B cell (primary cell): ENCODE measurements at regions of chr11 and their contacts with region 1.

Region 1: DNA sequence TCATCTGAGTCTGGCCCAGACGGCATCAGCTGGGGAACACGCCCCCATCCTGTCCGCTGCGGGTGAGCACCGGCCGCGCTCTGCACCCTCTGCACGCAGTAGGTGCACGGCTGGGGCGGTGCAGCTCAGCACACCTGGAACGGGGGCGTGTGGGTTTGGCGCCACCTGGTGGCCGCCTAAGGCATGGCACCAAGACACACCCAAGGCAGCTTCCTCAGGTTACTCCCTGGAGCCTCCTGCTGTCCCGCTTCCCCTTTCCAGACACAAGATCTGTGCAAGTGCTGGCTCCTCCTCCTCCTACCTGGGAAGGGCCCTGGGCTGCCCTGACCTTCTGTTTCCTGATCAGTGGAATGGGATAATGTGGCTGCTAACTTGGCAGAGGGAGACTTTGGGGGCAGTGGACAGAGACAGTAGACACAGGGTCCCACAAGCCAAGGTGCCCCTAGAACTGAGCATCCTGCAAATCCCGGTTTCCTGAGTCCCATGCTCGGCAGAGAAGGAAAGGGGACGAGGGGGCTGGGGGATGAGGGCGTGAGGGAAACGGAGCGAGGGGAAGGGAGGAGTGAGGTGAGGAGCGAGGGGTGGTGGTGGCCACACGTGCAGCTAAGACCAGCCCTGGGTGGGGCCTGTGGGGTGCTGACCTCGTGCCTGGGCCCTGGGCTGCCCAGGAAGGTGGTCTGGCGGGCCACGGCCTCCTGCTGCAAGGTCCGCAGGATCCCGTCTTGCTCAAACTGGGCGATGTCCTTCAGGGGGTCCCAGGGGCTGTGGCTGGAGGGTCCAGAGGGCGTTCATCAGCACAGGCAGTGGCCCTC is 34.8 kb upstream of the CARS1 start:
- DNase-seq: peak; percentile 83
- ATAC-seq: peak; percentile 92
- H3K4me3 ChIP-seq: no peak overlapping the region
- H3K4me3 Mint-ChIP-seq: no peak overlapping the region
- H3K27ac ChIP-seq: no peak overlapping the region
- H3K27ac Mint-ChIP-seq: no peak overlapping the region
- H3K4me1 ChIP-seq: peaks cover 0 to 6% of the 10 kb centered on the region in 2 donors
- H3K4me1 Mint-ChIP-seq: no peaks in the 10 kb centered on the region
- H3K27me3 ChIP-seq: peaks cover 0 to 7% (median 0%) of the 10 kb centered on the region in 4 experiments
- H3K27me3 Mint-ChIP-seq: peaks cover 18% of the 10 kb centered on the region
- CTCF ChIP-seq: peak; percentile 98

Region 2: GRCh38 chr11:2892215-2893020 is 199.6 kb before region 1 on chr11:
- CTCF ChIA-PET with region 1: interaction called, 34 read pairs
- POLR2A ChIA-PET with region 1: no interaction called
- intact Hi-C with region 1: no loop called
- DNase-seq: peak; percentile 74
- ATAC-seq: peak; percentile 69
- H3K4me3 ChIP-seq: peak overlapping the region in 4 of 5 experiments; percentile 33 to 62 (median 50)
- H3K4me3 Mint-ChIP-seq: peak overlapping the region; percentile 75
- H3K27ac ChIP-seq: no peak overlapping the region
- H3K27ac Mint-ChIP-seq: no peak overlapping the region
- H3K4me1 ChIP-seq: peaks cover 15 to 21% of the 10 kb centered on the region in 2 donors
- H3K4me1 Mint-ChIP-seq: peaks cover 17% of the 10 kb centered on the region
- H3K27me3 ChIP-seq: peaks cover 0 to 7% (median 0%) of the 10 kb centered on the region in 4 experiments
- H3K27me3 Mint-ChIP-seq: no peaks in the 10 kb centered on the region
- CTCF ChIP-seq: peak; percentile 88

Region 3: GRCh38 chr11:2975594-2975993 is 116.4 kb before region 1 on chr11:
- CTCF ChIA-PET with region 1: interaction called, 69 read pairs
- POLR2A ChIA-PET with region 1: no interaction called
- intact Hi-C with region 1: no loop called
- DNase-seq: peak; percentile 44
- ATAC-seq: peak; percentile 49
- H3K4me3 ChIP-seq: no peak overlapping the region
- H3K4me3 Mint-ChIP-seq: no peak overlapping the region
- H3K27ac ChIP-seq: no peak overlapping the region
- H3K27ac Mint-ChIP-seq: no peak overlapping the region
- H3K4me1 ChIP-seq: no peaks in the 10 kb centered on the region
- H3K4me1 Mint-ChIP-seq: peaks cover 5% of the 10 kb centered on the region
- H3K27me3 ChIP-seq: no peaks in the 10 kb centered on the region
- H3K27me3 Mint-ChIP-seq: no peaks in the 10 kb centered on the region
- CTCF ChIP-seq: peak; percentile 52

Region 4: GRCh38 chr11:3049430-3050243 is 42.4 kb before region 1 on chr11:
- CTCF ChIA-PET with region 1: interaction called, 106 read pairs
- POLR2A ChIA-PET with region 1: no interaction called
- intact Hi-C with region 1: loop called (anchors 1 kb)
- DNase-seq: peak; percentile 83
- ATAC-seq: peak; percentile 97
- H3K4me3 ChIP-seq: no peak overlapping the region
- H3K4me3 Mint-ChIP-seq: peak overlapping the region; percentile 64
- H3K27ac ChIP-seq: peak overlapping the region; percentile 77 to 81
- H3K27ac Mint-ChIP-seq: peak overlapping the region; percentile 94
- H3K4me1 ChIP-seq: peaks cover 13 to 35% of the 10 kb centered on the region in 2 donors
- H3K4me1 Mint-ChIP-seq: peaks cover 44% of the 10 kb centered on the region
- H3K27me3 ChIP-seq: no peaks in the 10 kb centered on the region
- H3K27me3 Mint-ChIP-seq: no peaks in the 10 kb centered on the region
- CTCF ChIP-seq: no peak

Region 5: DNA sequence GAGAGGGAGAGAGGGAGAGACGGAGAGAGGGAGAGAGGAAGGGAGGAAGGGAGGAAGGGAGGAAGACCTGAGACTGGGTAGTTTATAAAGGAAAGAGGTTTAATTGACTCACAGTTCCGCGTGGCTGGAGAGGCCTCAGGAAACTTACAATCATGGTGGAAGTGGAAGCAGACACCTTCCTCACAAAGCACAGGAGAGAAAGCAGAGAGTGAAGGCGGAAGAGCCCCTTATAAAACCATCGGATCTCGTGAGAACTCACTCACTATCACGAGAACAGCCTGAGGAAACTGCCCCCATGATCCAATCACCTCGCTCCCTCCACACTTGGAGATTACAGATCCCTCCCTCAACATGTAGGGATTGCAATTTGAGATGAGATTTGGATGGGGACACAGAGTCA is 22.6 kb before region 1 on chr11:
- CTCF ChIA-PET with region 1: interaction called, 11 read pairs
- POLR2A ChIA-PET with region 1: no interaction called
- intact Hi-C with region 1: no loop called
- DNase-seq: no peak
- ATAC-seq: no peak
- H3K4me3 ChIP-seq: no peak overlapping the region
- H3K4me3 Mint-ChIP-seq: no peak overlapping the region
- H3K27ac ChIP-seq: no peak overlapping the region
- H3K27ac Mint-ChIP-seq: no peak overlapping the region
- H3K4me1 ChIP-seq: no peaks in the 10 kb centered on the region
- H3K4me1 Mint-ChIP-seq: no peaks in the 10 kb centered on the region
- H3K27me3 ChIP-seq: peaks cover 0 to 2% (median under 1%) of the 10 kb centered on the region in 4 experiments
- H3K27me3 Mint-ChIP-seq: peaks cover 24% of the 10 kb centered on the region
- CTCF ChIP-seq: no peak

Region 6: DNA sequence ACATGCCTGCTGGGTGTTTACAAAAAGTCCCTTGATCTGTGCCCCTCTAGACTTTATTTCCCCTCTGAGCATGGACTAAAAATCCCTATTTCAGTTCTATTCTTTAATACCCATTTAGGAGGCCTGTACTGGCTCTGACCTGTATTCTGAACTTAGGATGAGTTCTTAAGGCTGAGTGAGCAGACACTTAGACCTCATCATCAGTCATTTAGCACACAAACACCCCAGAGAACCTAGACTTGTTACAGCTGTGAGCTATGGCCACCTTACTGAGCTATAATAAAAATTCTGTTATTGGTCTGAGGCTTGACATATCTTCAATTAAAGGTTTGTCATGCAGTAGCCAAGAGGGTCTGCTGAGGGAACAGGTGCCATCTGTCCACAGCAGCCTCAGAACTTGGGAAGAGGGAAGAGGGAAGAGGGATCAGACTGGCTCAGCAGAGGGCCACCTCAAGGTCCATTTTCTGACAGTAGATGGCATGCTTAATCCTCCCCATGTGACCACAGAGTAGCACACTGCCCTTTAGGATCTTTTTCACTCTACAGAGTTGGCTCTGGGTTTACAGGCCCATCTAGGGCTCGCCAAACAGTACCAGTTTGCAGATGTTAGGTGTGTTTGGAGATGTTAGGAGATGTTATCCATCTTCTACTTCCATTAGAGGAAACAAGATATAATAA is 972.4 kb after region 1 on chr11:
- CTCF ChIA-PET with region 1: no interaction called
- POLR2A ChIA-PET with region 1: no interaction called
- intact Hi-C with region 1: no loop called
- DNase-seq: no peak
- ATAC-seq: no peak
- H3K4me3 ChIP-seq: no peak overlapping the region
- H3K4me3 Mint-ChIP-seq: no peak overlapping the region
- H3K27ac ChIP-seq: peak overlapping the region in 1 of 2 donors; percentile 11
- H3K27ac Mint-ChIP-seq: no peak overlapping the region
- H3K4me1 ChIP-seq: peaks cover 18 to 26% of the 10 kb centered on the region in 2 donors
- H3K4me1 Mint-ChIP-seq: peaks cover 43% of the 10 kb centered on the region
- H3K27me3 ChIP-seq: no peaks in the 10 kb centered on the region
- H3K27me3 Mint-ChIP-seq: no peaks in the 10 kb centered on the region
- CTCF ChIP-seq: no peak